ENCODE measurements at regions of chr22 and their contacts with region 1.

Region 1: DNA sequence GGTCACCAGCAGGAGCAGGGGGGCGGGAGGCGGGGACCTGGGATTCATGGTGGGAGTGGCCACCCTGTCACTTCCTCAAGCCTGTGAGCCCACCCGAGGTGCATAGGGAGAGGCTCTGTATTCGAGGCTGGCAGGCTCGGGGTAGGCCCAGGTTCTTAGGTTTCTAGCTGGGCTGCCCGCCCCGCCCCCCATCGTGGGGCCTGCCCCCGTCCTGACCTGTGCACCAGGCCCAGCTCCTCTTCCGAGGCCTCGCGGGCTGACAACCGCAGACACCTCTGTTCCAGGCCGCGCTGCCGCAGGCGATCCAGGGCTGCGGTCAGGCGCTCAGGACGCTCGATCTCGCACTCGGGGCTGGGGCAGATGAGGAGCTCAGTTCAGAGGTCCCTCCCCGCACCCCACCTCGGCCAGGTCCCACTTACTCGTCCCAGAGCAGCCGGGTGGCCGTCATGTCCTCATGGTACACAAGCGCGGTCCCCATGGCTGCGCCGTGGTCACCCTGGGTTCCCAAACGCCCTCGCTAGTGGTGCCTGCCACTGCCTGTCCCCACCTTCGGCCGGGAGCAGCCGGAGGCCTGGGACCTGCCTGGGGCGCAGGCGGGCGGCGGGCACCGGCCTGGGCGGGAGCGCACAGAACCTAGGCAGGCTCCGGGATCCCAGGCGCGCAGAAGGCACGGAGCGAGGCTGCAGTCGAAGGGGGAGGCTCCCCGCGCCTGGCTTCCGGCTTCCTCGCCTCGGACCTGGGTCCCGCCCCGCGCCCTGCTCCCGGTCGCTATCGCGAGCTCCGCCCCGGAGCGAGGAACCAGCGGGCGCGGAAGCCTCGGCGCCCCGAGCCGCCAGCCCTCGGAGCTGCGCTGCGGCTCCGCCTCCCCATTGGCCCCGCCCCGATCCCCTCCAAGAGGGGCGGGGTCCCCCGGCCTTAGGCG is at the start of gene HDAC10:
- DNase-seq: peak; percentile 73 to 84 (median 77)
- H3K4me3 ChIP-seq: peak within 1 kb of the TSS; percentile 21 to 93 (median 48)
- H3K27ac ChIP-seq: peak within 1 kb of the TSS in 3 of 5 donors; percentile 43 to 80 (median 67)
- H3K4me1 ChIP-seq: peaks cover 21 to 23% of the 10 kb centered on the region in 2 donors
- H3K27me3 ChIP-seq: no peaks in the 10 kb centered on the region
- CTCF ChIP-seq: no peak
- POLR2A ChIP-seq: peak in 1 of 2 donors; percentile 35
- total RNA-seq, gene HDAC10: 9.7 to 72.1 (median 39.1) TPM

Region 2: DNA sequence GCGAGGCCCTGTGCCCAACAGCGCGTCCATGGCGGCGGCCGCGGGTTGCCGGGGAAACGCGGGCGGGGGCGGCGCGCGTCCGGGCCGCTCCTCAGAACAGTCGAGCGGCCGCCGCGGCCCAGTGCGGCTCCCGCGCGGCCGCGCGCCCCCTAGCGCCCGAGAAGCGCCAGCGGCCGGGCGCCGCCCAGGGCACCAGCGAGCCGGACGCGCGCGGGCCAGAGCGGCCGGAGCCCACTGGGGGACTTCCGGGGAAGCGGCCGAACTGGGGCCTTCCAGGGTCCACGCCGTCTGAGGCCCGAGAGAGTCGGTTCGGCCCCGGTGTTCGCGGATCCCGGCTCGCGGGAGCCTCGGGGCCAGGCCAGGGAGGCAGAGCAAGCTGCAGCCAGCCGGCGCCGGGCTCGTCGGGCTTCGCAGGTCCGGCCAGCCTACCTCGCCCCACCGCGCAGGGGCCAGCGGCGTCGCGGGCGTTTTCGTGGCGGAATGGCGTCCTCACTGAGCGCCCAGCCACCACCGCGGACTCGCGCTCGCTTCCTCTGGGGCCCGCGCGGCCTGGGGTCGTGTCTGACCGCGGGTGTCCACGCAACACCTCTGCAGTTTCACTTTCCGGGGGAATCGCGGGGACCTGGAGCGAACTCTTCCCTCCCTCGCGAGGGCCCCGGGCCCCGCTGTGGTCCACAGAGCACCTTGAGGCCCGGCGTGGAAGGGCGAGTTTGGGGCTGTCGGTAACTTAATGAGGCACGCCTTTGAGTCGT is 76.3 kb after region 1 on chr22 and contains the start of gene DENND6B:
- intact Hi-C with region 1: no loop called
- DNase-seq: peak; percentile 76 to 88 (median 78)
- H3K4me3 ChIP-seq: peak within 1 kb of the TSS in 3 of 4 donors; percentile 34 to 92 (median 75)
- H3K27ac ChIP-seq: peak within 1 kb of the TSS; percentile 31 to 97 (median 92)
- H3K4me1 ChIP-seq: peaks cover 8 to 17% of the 10 kb centered on the region in 2 donors
- H3K27me3 ChIP-seq: no peaks in the 10 kb centered on the region
- CTCF ChIP-seq: peak in 4 of 6 experiments; percentile 44 to 95 (median 75)
- POLR2A ChIP-seq: peak; percentile 36 to 71
- total RNA-seq, gene DENND6B: 1.8 to 16.9 (median 8.0) TPM

Region 3: GRCh38 chr22:50612528-50613221 is 361.9 kb after region 1 on chr22:
- intact Hi-C with region 1: loop called in 1 of 2 experiments (anchors 10 kb)
- DNase-seq: no peak
- H3K4me3 ChIP-seq: no peak overlapping the region
- H3K27ac ChIP-seq: no peak overlapping the region
- H3K4me1 ChIP-seq: no peaks in the 10 kb centered on the region
- H3K27me3 ChIP-seq: no peaks in the 10 kb centered on the region
- CTCF ChIP-seq: no peak
- POLR2A ChIP-seq: no peak